K562 (cell line): ENCODE measurements at regions of chr13 and their contacts with region 1.

Region 1: GRCh38 chr13:91406619-91407018 is 8.2 kb downstream of the GPC5 start:
- DNase-seq: peak; percentile 83 to 93 (median 86)
- ATAC-seq: peak; percentile 95
- H3K4me3 ChIP-seq: no peak overlapping the region
- H3K27ac ChIP-seq: no peak overlapping the region
- H3K4me1 ChIP-seq: no peaks in the 10 kb centered on the region
- H3K27me3 ChIP-seq: no peaks in the 10 kb centered on the region
- CTCF ChIP-seq: peak in 1 of 3 experiments; percentile 98; a peak in 2 of 6 replicates
- EP300 ChIP-seq: no peak
- POLR2A ChIP-seq: no peak
- RAD21 ChIP-seq: no peak

Region 2: GRCh38 chr13:91133941-91134802 is 272.4 kb before region 1 on chr13:
- CTCF ChIA-PET with region 1: interaction called, 13 read pairs
- POLR2A ChIA-PET with region 1: no interaction called
- in situ Hi-C with region 1: no loop called
- intact Hi-C with region 1: loop called (anchors 1 kb)
- DNase-seq: peak; percentile 78 to 96 (median 90)
- ATAC-seq: peak; percentile 94
- H3K4me3 ChIP-seq: no peak overlapping the region
- H3K27ac ChIP-seq: no peak overlapping the region
- H3K4me1 ChIP-seq: no peaks in the 10 kb centered on the region
- H3K27me3 ChIP-seq: no peaks in the 10 kb centered on the region
- CTCF ChIP-seq: peak in 1 of 3 experiments; percentile 98; a peak in 2 of 6 replicates
- EP300 ChIP-seq: 0 out of 2 replicates have a peak, but pooled peaks have one; percentile 26
- POLR2A ChIP-seq: no peak
- RAD21 ChIP-seq: peak; percentile 95 to 97

Region 3: GRCh38 chr13:91313103-91313502 is 93.5 kb before region 1 on chr13:
- CTCF ChIA-PET with region 1: interaction called, 15 read pairs
- POLR2A ChIA-PET with region 1: no interaction called
- in situ Hi-C with region 1: no loop called
- intact Hi-C with region 1: loop called (anchors 1 kb)
- DNase-seq: peak in 2 of 4 experiments; percentile 45 to 65
- ATAC-seq: peak; percentile 84
- H3K4me3 ChIP-seq: no peak overlapping the region
- H3K27ac ChIP-seq: no peak overlapping the region
- H3K4me1 ChIP-seq: no peaks in the 10 kb centered on the region
- H3K27me3 ChIP-seq: no peaks in the 10 kb centered on the region
- CTCF ChIP-seq: no peak
- EP300 ChIP-seq: no peak
- POLR2A ChIP-seq: no peak
- RAD21 ChIP-seq: peak in 1 of 2 experiments; percentile 88; a peak in 2 of 4 replicates

Region 4: GRCh38 chr13:91375116-91375729 is 31.4 kb before region 1 on chr13:
- CTCF ChIA-PET with region 1: interaction called, 17 read pairs
- POLR2A ChIA-PET with region 1: no interaction called
- in situ Hi-C with region 1: no loop called
- intact Hi-C with region 1: loop called (anchors 2 kb)
- DNase-seq: peak; percentile 69 to 83 (median 78)
- ATAC-seq: peak; percentile 94
- H3K4me3 ChIP-seq: no peak overlapping the region
- H3K27ac ChIP-seq: no peak overlapping the region
- H3K4me1 ChIP-seq: no peaks in the 10 kb centered on the region
- H3K27me3 ChIP-seq: no peaks in the 10 kb centered on the region; a peak in 1 of 5 replicates
- CTCF ChIP-seq: peak in 1 of 3 experiments; percentile 93; a peak in 2 of 6 replicates
- EP300 ChIP-seq: no peak
- POLR2A ChIP-seq: no peak
- RAD21 ChIP-seq: no peak

Region 5: DNA sequence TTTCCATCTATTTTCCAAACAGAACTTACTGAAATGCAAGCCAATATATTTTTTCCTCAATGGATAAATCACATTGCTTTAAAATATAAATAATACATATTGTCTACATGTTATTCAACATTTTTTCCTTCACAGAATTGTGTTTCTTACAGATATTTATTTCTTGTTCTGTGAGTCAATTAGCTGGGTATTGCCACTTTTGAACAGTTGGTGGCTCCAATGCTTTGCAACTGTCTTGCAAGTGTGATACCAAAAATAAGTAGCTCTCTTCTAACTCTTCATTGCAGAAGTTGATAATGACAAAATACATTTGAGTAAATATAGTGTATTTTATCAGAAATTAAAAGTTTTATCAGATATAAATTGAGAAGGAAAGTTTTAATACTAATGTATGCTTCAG is 25.2 kb before region 1 on chr13:
- CTCF ChIA-PET with region 1: interaction called, 5 read pairs
- POLR2A ChIA-PET with region 1: no interaction called
- in situ Hi-C with region 1: no loop called
- intact Hi-C with region 1: loop called (anchors 1 kb)
- DNase-seq: peak in 1 of 4 experiments; percentile 60
- ATAC-seq: peak; percentile 55; the same call in 2 of the 3 replicates
- H3K4me3 ChIP-seq: no peak overlapping the region
- H3K27ac ChIP-seq: no peak overlapping the region
- H3K4me1 ChIP-seq: no peaks in the 10 kb centered on the region
- H3K27me3 ChIP-seq: no peaks in the 10 kb centered on the region
- CTCF ChIP-seq: peak in 1 of 3 experiments; percentile 81; a peak in 2 of 6 replicates
- EP300 ChIP-seq: no peak
- POLR2A ChIP-seq: no peak
- RAD21 ChIP-seq: no peak

Region 6: GRCh38 chr13:91557328-91558090 is 150.9 kb after region 1 on chr13:
- CTCF ChIA-PET with region 1: no interaction called
- POLR2A ChIA-PET with region 1: no interaction called
- in situ Hi-C with region 1: no loop called
- intact Hi-C with region 1: loop called (anchors 1 kb)
- DNase-seq: peak in 1 of 4 experiments; percentile 48
- ATAC-seq: peak; percentile 83
- H3K4me3 ChIP-seq: no peak overlapping the region
- H3K27ac ChIP-seq: no peak overlapping the region
- H3K4me1 ChIP-seq: no peaks in the 10 kb centered on the region
- H3K27me3 ChIP-seq: no peaks in the 10 kb centered on the region
- CTCF ChIP-seq: peak; percentile 34 to 55 (median 35); a peak in 4 of 6 replicates
- EP300 ChIP-seq: no peak
- POLR2A ChIP-seq: no peak
- RAD21 ChIP-seq: peak in 1 of 2 experiments; percentile 81; a peak in 2 of 4 replicates

Region 7: GRCh38 chr13:91817250-91817649 is 410.6 kb after region 1 on chr13:
- CTCF ChIA-PET with region 1: no interaction called
- POLR2A ChIA-PET with region 1: no interaction called
- in situ Hi-C with region 1: no loop called
- intact Hi-C with region 1: no loop called
- DNase-seq: peak; percentile 7 to 38 (median 16)
- ATAC-seq: peak; percentile 45; the same call in 1 of the 3 replicates
- H3K4me3 ChIP-seq: no peak overlapping the region
- H3K27ac ChIP-seq: no peak overlapping the region
- H3K4me1 ChIP-seq: no peaks in the 10 kb centered on the region
- H3K27me3 ChIP-seq: no peaks in the 10 kb centered on the region
- CTCF ChIP-seq: peak in 1 of 3 experiments; percentile 54; a peak in 2 of 6 replicates
- EP300 ChIP-seq: no peak
- POLR2A ChIP-seq: no peak
- RAD21 ChIP-seq: peak; percentile 29 to 54; a peak in 3 of 4 replicates